ENCODE measurements at regions of chr6 and their contacts with region 1.

Region 1: GRCh38 chr6:84422380-84422968 is 195.0 kb upstream of the CEP162 start:
- DNase-seq: peak; percentile 31
- H3K27ac ChIP-seq: no peak overlapping the region
- CTCF ChIP-seq: peak; percentile 72

Region 2: GRCh38 chr6:84455630-84456029 is 33.2 kb after region 1 on chr6:
- CTCF ChIA-PET with region 1: no interaction called
- POLR2A ChIA-PET with region 1: no interaction called
- DNase-seq: no peak
- H3K27ac ChIP-seq: no peak overlapping the region
- CTCF ChIP-seq: no peak

Region 3: DNA sequence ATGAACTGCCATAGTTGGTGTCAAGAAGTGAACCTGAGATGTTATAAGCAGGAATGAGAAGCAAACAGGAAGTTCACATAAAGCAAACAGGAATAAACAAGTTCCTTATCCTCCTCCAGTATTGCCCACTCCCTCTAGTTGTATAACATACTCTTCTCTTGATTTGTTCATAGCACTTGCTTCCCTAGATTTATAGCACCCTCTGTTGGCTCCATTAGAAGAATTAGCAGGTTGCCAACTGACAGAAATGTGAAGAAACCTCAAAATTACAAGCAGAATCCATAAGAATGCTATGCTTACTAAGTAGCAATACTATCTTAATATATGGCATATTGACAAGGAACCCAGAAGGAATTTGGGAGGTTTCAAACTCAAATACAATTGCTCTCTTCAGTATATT is 146.5 kb after region 1 on chr6:
- CTCF ChIA-PET with region 1: no interaction called
- POLR2A ChIA-PET with region 1: no interaction called
- DNase-seq: no peak
- H3K27ac ChIP-seq: no peak overlapping the region
- CTCF ChIP-seq: no peak

Region 4: DNA sequence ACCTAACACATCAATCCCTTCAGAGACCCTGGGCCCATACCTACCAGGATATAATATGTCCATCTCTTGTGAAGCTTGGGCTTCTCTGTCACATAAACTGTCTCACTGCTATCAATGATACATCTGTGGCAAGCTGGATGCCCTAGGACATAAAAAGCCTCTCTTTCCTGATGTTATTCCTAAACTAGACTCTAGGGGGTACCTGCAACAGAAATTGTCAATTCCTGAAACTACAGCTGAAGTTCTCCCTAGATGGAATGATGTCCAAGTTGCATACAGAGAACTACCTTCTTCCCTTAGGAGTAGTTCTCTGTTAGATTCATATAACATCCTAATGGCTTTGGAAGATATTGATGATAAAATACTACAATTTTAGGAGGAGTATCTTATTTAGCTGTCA is 306.1 kb after region 1 on chr6:
- CTCF ChIA-PET with region 1: interaction called, 11 read pairs
- POLR2A ChIA-PET with region 1: no interaction called
- DNase-seq: peak; percentile 26
- H3K27ac ChIP-seq: no peak overlapping the region
- CTCF ChIP-seq: peak; percentile 26; the same call in 1 of the 2 replicates

Region 5: DNA sequence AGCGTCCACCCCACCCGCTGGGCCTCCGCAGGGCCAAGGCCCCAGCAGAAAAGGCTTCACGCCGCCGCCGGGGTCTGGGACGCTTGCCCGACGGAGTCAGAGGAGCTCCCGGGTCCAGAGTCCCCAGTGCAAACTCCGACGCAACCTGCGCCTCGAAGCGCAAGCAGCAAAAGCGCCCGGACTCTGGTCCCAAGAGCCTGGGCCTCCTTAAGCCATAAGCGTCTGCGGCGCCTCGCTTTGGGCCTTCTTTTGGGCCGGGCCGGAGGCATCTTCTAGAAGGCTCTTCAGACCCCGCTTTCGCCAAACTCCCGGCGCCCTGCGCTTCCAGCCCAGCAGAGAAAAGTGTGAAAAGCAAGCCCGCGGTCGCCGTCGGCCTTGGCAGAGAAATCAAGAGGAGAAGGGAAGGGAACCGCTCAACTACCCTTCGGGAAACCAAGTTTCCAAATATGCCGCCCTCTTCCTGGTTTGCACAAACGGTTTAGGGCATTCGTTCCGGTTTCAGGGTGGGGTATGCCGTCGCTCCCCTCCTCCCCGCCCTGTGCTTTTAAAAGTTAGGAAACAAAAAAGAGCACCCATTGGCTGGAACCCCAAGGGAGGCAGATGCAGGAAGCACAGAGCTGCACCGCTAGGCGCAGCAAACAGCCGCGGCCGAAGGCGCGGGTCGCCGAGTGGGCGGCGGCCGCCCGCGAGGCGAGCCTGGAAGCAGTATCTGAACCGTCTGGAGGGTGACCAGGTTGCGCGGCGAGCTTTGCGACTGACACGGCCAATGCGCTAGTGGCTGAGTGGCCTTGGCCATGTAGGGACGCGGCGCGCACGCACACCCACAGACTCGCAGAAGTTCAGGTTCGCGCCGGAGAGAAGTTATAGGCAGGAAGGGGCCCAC is 340.8 kb after region 1 on chr6:
- CTCF ChIA-PET with region 1: interaction called, 11 read pairs
- POLR2A ChIA-PET with region 1: no interaction called
- DNase-seq: peak; percentile 85
- H3K27ac ChIP-seq: peak overlapping the region; percentile 95
- CTCF ChIP-seq: peak; percentile 11; the same call in 1 of the 2 replicates